SK-N-SH (cell line): ENCODE measurements at regions of chr15 and their contacts with region 1.

Region 1: DNA sequence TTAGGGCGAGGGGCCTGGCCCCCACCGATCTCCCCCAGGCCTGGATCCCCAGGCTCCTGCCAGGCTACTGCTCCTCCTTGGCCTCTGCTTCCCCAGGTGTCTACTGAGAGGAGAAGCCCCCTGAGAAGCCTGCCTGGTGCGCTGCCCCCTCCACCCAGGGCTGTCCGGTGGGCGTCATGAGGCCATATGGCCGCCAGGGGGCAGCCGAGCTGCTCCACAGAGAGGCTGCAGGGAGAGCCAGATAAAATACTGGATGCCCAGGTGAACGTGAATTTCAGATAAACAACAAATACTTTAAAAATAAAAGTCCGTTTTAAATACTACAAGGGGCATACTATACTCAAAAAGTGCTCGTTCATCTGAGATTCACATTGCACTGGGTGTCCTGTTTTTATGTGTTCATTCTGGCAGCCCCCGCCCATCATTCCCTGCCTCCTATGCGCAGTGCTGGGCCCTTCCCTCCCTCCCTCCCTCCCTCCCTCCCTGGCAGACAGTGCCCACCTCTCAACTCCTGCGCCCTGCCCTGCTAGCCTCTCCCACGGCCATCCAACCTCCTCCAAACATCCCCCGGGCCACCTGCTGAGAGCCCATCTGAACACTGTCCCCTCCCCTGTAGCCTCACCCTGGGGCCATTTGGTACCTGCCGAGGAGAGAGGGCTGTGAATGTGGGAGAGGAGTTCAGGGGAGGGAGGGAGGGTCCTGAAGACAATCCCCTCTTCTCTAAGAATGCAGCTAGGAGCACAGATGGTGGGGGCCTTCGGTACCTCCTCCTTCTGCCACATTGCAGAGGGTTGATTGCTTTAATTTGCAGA is 29.6 kb downstream of the PSTPIP1 start:
- DNase-seq: peak; percentile 94
- H3K4me3 ChIP-seq: no peak overlapping the region; a peak in 1 of 4 replicates
- H3K27ac ChIP-seq: no peak overlapping the region
- H3K4me1 ChIP-seq: peaks cover 0 to 10% of the 10 kb centered on the region in 2 experiments; a peak in 3 of 4 replicates
- H3K27me3 ChIP-seq: no peaks in the 10 kb centered on the region
- CTCF ChIP-seq: peak; percentile 94
- EP300 ChIP-seq: no peak
- RAD21 ChIP-seq: peak; percentile 81

Region 2: DNA sequence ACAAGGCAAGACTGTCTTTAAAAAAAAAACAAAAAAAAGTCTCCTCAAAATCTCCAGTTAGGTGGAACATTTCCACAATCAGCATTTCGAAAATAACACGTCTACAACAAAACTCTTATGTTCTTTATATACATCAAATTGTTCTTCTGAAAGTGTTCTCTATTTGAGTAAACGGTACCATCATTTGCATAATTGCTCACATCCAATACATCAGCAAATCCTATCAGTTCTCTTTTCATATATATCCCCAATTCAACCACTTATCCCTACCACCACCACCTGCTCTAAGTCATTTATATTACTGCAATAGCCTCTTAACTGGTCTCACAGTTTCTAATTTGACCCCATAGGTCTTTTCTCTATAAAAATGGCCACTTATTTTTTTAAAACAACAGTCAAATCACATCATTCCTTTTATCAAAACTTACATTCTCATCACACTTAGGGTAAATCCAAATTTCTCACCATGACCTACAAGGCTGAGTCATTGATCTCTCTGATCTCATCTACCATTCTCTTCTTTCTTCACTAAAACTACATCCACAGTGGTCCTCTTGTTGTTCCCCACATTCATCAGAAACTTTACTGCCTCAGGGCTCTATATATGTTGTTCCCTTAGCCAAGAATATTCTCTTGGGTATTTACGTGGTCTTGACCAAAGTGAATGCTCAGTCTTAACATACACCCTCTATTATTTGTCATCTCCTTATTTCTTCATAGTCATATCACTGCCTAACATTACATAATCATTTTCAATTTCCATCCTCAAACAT is 356.3 kb before region 1 on chr15:
- CTCF ChIA-PET with region 1: no interaction called
- POLR2A ChIA-PET with region 1: no interaction called
- DNase-seq: no peak
- H3K4me3 ChIP-seq: no peak overlapping the region
- H3K27ac ChIP-seq: no peak overlapping the region
- H3K4me1 ChIP-seq: no peaks in the 10 kb centered on the region
- H3K27me3 ChIP-seq: no peaks in the 10 kb centered on the region
- CTCF ChIP-seq: no peak
- EP300 ChIP-seq: no peak
- RAD21 ChIP-seq: no peak

Region 3: GRCh38 chr15:77013776-77014131 is 10.7 kb before region 1 on chr15:
- CTCF ChIA-PET with region 1: interaction called, 20 read pairs
- POLR2A ChIA-PET with region 1: no interaction called
- DNase-seq: no peak
- H3K4me3 ChIP-seq: no peak overlapping the region
- H3K27ac ChIP-seq: no peak overlapping the region
- H3K4me1 ChIP-seq: peaks cover 0 to 22% of the 10 kb centered on the region in 2 experiments; a peak in 1 of 4 replicates
- H3K27me3 ChIP-seq: no peaks in the 10 kb centered on the region
- CTCF ChIP-seq: no peak
- EP300 ChIP-seq: no peak
- RAD21 ChIP-seq: no peak

Region 4: DNA sequence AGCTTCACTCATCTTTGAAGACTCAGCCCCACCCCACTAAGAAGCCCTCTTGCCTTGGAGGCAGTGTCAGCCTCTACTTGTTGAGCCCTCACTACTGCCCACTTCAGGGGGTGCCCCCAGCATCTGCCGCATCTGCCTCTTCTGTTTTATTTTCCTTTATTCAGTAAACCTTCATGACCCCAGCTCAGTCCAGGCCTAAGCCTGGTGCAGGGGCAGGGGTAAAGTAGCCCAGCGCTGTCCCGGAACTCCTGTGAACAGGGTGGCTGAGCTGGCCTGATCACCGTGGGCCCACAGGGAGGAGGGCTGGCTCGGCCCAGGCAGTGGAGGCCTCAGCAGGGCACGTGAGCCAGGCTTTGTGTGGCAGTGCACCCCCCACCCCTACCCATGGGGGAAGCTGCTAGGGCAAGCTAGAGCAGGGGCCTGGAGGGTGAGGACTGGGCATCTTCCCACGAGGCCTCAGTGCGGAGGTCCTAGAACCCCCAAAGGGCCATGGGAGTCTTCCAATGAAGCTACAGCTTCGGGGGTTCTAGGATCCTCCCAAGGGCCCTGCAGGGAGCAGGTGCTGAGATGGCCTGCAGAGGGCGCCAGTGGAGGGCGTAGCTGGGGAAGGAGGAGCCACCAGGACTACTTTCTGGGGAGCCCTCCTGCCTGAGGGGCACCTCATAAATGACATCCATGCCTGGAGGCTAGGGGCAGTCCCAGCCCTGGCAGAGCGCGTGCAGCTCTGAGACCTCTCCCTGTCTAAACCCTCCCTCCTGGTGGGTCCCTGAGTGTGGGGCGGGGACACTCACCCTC is 10.4 kb after region 1 on chr15:
- CTCF ChIA-PET with region 1: interaction called, 46 read pairs
- POLR2A ChIA-PET with region 1: no interaction called
- DNase-seq: peak; percentile 78
- H3K4me3 ChIP-seq: no peak overlapping the region; a peak in 1 of 4 replicates
- H3K27ac ChIP-seq: no peak overlapping the region
- H3K4me1 ChIP-seq: no peaks in the 10 kb centered on the region; a peak in 1 of 4 replicates
- H3K27me3 ChIP-seq: no peaks in the 10 kb centered on the region
- CTCF ChIP-seq: peak; percentile 71
- EP300 ChIP-seq: no peak
- RAD21 ChIP-seq: peak; percentile 40